Mucosa of descending colon (tissue), 3 donors: ENCODE measurements at regions of chr1 and their contacts with region 1.

Region 1: GRCh38 chr1:93629099-93630059 is 52.3 kb downstream of the BCAR3 start:
- DNase-seq: peak in 1 of 3 donors; percentile 75
- ATAC-seq: peak; percentile 86
- H3K4me3 ChIP-seq: no peak overlapping the region
- H3K4me1 ChIP-seq: no peaks in the 10 kb centered on the region
- CTCF ChIP-seq: peak; percentile 58

Region 2: DNA sequence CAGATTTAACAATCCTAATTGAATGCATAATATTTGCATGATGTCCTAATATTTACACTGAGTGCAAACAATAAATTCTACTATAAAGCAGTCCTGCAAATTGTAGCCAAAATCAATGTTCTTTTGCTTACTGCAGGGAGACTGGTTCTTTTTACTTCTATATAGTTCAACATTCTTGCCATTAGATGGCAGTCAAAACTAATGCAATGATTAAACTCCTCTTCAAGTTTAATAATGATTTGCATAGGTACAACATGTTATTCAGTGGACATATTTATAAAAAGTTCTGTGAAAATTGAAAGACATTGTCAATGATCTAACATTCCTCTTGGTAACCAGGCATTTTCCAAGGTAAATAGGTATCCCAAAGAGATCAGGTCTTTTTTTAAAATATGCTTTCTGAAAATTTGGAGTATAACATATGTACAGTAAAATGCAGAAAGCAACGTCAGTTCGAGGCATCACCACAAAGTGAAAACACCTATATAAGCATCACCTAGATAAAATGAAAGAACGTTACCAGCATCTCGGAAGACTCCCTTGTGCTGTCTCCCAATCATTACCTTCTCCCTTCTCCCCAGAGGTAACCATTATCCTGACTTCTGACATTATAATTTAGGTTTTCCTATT is 191.3 kb before region 1 on chr1:
- intact Hi-C with region 1: loop called in 1 of 2 experiments (anchors 5 kb)
- DNase-seq: no peak
- ATAC-seq: peak; percentile 41
- H3K4me3 ChIP-seq: no peak overlapping the region
- H3K4me1 ChIP-seq: peaks cover 5% of the 10 kb centered on the region
- CTCF ChIP-seq: no peak

Region 3: GRCh38 chr1:93814059-93814794 is 184.8 kb after region 1 on chr1:
- intact Hi-C with region 1: loop called (anchors 5 to 10 kb)
- DNase-seq: peak in 1 of 3 donors; percentile 87
- ATAC-seq: peak; percentile 89
- H3K4me3 ChIP-seq: no peak overlapping the region
- H3K4me1 ChIP-seq: no peaks in the 10 kb centered on the region
- CTCF ChIP-seq: peak; percentile 83

Region 4: DNA sequence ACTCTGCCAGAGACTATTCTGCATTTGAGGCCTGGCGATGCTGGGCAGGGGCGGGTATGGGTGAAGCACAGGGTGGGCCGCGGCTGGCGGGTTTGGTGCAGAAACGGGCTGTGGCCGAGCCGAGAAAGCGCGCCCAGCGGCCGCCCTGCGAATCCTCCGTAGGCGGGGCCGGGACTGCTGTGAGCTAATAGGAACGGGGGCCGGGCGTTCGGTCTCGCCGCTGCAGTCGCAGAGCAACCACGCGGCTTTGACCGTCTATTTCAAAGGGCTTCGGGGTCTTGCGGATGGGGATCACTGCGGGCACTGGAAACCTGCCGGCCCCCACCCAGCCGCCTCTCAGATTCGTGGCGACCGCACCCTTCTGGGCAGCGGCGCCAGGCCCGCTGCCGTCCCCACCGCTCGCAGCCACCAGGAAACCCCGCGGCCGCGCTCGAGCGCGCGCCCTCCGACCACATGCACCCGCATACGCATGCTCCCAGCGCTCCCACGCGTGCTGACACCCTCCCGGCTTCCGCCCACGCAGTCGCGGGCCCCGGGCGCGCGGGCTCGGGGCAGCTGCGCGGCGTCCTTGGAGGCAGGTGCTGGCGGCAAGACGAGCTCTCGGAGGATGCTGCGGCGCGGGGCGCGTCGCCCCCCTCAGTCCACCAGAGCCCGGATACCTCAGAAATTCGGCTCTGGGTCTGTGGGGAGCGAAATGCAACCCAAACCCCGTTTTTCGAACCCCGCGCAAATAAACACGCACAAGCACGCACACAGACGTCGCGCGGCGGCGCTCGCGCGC is 217.0 kb after region 1 on chr1:
- intact Hi-C with region 1: loop called in 1 of 2 experiments (anchors 10 kb)
- DNase-seq: peak; percentile 92 to 94 (median 92)
- ATAC-seq: peak; percentile 75
- H3K4me3 ChIP-seq: peak overlapping the region; percentile 75
- H3K4me1 ChIP-seq: peaks cover 16% of the 10 kb centered on the region
- CTCF ChIP-seq: peak; percentile 12